ENCODE measurements at regions of chr10 and their contacts with region 1.

Region 1: DNA sequence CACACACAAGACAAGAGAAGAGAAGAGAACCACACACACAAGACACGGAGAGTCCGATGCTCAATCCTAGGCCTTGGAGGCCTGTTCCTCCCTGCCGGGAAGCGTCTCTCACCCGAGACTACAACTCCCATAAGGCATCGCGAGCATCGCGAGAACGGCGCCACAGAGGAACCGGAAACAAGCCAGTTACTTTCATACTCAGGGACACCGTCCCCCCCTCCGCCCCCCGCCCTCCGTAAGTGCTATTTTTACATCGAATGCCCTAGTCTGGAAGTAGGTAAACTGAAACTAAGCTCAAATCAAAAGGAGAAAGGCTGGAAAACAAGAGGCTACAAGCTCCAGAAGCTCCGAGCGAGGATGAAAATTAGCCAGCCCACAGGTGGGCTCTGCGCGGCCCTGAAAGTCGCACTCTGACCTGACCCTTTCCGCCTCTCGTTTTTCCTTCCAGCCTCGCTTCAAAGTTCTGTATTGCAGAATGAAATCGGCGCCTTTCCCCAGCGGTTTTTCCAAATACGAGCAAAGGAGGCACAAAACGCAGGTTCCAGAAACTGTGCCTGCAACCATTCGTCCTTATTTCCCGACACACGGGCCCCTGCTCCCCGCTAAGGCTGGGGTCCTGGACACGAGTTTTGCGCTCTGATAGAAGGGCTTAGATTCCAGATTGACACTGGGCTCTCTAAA is 11.5 kb upstream of the DNAJC12 start:
- DNase-seq: peak; percentile 89
- ATAC-seq: peak; percentile 99
- H3K4me3 ChIP-seq: peak overlapping the region; percentile 73 to 84 (median 79)
- H3K27ac ChIP-seq: peak overlapping the region; percentile 91
- H3K4me1 ChIP-seq: peaks cover 22% of the 10 kb centered on the region
- H3K27me3 ChIP-seq: no peaks in the 10 kb centered on the region
- CTCF ChIP-seq: no peak
- EP300 ChIP-seq: peak in 1 of 2 experiments; percentile 37; a peak in 1 of 4 replicates
- POLR2A ChIP-seq: peak; percentile 35 to 71
- RAD21 ChIP-seq: no peak

Region 2: GRCh38 chr10:67788025-67788886 is 61.2 kb before region 1 on chr10:
- CTCF ChIA-PET with region 1: no interaction called
- POLR2A ChIA-PET with region 1: interaction called, 16 read pairs
- in situ Hi-C with region 1: loop called (anchors 5 kb)
- intact Hi-C with region 1: loop called (anchors 1 kb)
- DNase-seq: peak; percentile 42
- ATAC-seq: peak; percentile 95
- H3K4me3 ChIP-seq: peak overlapping the region in 1 of 3 experiments; percentile 49; a peak in 4 of 6 replicates
- H3K27ac ChIP-seq: no peak overlapping the region
- H3K4me1 ChIP-seq: peaks cover 28% of the 10 kb centered on the region
- H3K27me3 ChIP-seq: no peaks in the 10 kb centered on the region
- CTCF ChIP-seq: peak; percentile 96
- EP300 ChIP-seq: no peak
- POLR2A ChIP-seq: no peak
- RAD21 ChIP-seq: peak; percentile 82

Region 3: GRCh38 chr10:67837541-67838314 is 11.7 kb before region 1 on chr10 and contains the start of gene DNAJC12:
- CTCF ChIA-PET with region 1: no interaction called
- POLR2A ChIA-PET with region 1: interaction called, 19 read pairs
- in situ Hi-C with region 1: no loop called
- intact Hi-C with region 1: no loop called
- DNase-seq: peak; percentile 74
- ATAC-seq: peak; percentile 99
- H3K4me3 ChIP-seq: peak within 1 kb of the TSS; percentile 58 to 73 (median 66)
- H3K27ac ChIP-seq: peak within 1 kb of the TSS; percentile 59
- H3K4me1 ChIP-seq: peaks cover 32% of the 10 kb centered on the region
- H3K27me3 ChIP-seq: no peaks in the 10 kb centered on the region
- CTCF ChIP-seq: peak; percentile 36; the same call in 1 of the 2 replicates
- EP300 ChIP-seq: no peak
- POLR2A ChIP-seq: peak in 1 of 2 experiments; percentile 66; a peak in 2 of 4 replicates
- RAD21 ChIP-seq: no peak
- total RNA-seq, gene DNAJC12: 11.6 and 14.4 TPM in 2 replicates

Region 4: GRCh38 chr10:68156373-68157185 is 307.1 kb after region 1 on chr10:
- CTCF ChIA-PET with region 1: no interaction called
- POLR2A ChIA-PET with region 1: no interaction called
- in situ Hi-C with region 1: loop called (anchors 5 kb)
- intact Hi-C with region 1: no loop called
- DNase-seq: peak; percentile 57
- ATAC-seq: peak; percentile 67
- H3K4me3 ChIP-seq: no peak overlapping the region
- H3K27ac ChIP-seq: no peak overlapping the region
- H3K4me1 ChIP-seq: peaks cover 13% of the 10 kb centered on the region
- H3K27me3 ChIP-seq: no peaks in the 10 kb centered on the region
- CTCF ChIP-seq: peak; percentile 76
- EP300 ChIP-seq: no peak
- POLR2A ChIP-seq: no peak
- RAD21 ChIP-seq: peak; percentile 66; the same call in 1 of the 2 replicates

Region 5: GRCh38 chr10:68301790-68302502 is 452.5 kb after region 1 on chr10:
- CTCF ChIA-PET with region 1: no interaction called
- POLR2A ChIA-PET with region 1: no interaction called
- in situ Hi-C with region 1: loop called (anchors 25 kb)
- intact Hi-C with region 1: no loop called
- DNase-seq: peak; percentile 50
- ATAC-seq: peak; percentile 75
- H3K4me3 ChIP-seq: no peak overlapping the region
- H3K27ac ChIP-seq: no peak overlapping the region
- H3K4me1 ChIP-seq: peaks cover 41% of the 10 kb centered on the region
- H3K27me3 ChIP-seq: no peaks in the 10 kb centered on the region
- CTCF ChIP-seq: peak; percentile 67
- EP300 ChIP-seq: no peak
- POLR2A ChIP-seq: no peak
- RAD21 ChIP-seq: peak; percentile 44; the same call in 1 of the 2 replicates

Measured in HepG2 (cell line).